ENCODE measurements at regions of chr7 and their contacts with region 1.

Region 1: DNA sequence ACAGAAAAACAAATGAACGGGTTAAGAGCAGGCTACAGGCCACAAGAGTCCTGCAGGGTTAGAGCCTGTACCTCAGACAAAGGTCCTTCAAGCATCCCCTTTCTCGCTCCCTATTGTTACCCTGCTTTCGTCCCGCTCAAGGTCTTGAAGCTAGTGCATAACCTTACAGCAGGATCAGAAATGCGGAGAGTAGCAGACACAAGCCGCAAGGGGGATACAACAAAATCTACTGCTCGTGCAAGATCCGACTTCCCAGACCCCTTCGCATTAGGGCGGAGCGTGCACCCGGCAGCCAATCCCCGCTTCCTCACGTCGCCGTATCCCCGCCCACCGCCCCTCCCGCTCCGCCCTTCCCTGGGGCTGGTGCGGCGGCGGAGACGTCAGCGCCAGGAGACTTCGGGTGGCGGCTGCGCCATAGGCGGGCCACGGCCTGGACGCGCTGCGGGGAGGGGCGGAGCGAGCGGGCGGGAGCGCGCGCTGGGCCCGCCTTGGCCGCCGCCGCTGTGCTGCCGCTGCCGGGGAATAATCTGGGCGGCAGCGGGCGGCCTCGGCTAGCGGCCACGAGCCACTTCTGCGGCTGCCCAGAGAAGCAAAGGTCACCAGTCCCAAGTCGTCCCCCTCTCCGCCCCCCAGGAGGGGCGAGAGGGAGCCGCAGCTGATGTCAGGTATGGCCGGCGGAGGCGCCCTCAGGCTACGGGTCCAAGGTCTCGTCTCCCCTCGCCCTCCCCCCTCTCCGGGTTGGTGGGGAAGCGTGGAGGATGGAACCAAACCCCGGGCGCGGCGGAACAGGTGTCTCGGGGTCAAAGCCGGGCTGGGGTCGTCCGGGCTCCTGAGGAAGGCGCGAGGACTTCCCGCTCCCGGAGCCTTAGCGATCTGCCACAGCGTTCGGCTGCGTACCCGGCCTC is at the start of gene C1GALT1:
- DNase-seq: peak; percentile 96 to 98 (median 98)
- H3K4me3 ChIP-seq: peak within 1 kb of the TSS; percentile 100
- H3K4me3 Mint-ChIP-seq: peak within 1 kb of the TSS; percentile 89 to 98 (median 93)
- H3K27ac ChIP-seq: peak within 1 kb of the TSS; percentile 95
- H3K27ac Mint-ChIP-seq: peak within 1 kb of the TSS; percentile 91 to 98 (median 98)
- H3K4me1 ChIP-seq: peaks cover 43% of the 10 kb centered on the region
- H3K4me1 Mint-ChIP-seq: peaks cover 11 to 28% (median 17%) of the 10 kb centered on the region in 3 donors
- H3K27me3 ChIP-seq: no peaks in the 10 kb centered on the region
- H3K27me3 Mint-ChIP-seq: no peaks in the 10 kb centered on the region
- total RNA-seq, gene C1GALT1: 40.4 to 40.7 TPM

Region 2: DNA sequence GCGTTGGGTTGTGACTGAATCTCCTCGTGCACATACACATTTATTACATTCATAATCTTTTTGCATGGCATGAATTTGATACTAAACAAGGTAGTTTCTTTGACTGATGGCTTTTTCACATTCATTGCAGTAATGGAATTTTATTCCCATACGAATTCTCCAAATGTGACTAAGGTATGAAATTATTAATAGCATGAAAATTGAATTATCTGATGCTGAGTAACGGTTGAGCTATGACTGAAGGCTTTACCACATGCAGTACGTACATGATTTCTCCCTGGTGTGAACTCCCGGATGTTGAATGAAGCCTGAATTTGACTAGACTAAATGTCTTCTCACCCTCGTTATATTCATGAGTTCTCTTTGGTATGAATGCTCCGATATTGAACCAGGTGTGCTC is 104.5 kb before region 1 on chr7:
- CTCF ChIA-PET with region 1: no interaction called
- POLR2A ChIA-PET with region 1: no interaction called
- DNase-seq: no peak
- H3K4me3 ChIP-seq: no peak overlapping the region
- H3K4me3 Mint-ChIP-seq: no peak overlapping the region
- H3K27ac ChIP-seq: no peak overlapping the region
- H3K27ac Mint-ChIP-seq: no peak overlapping the region
- H3K4me1 ChIP-seq: no peaks in the 10 kb centered on the region
- H3K4me1 Mint-ChIP-seq: peaks cover 0 to 7% (median 0%) of the 10 kb centered on the region in 3 donors
- H3K27me3 ChIP-seq: no peaks in the 10 kb centered on the region
- H3K27me3 Mint-ChIP-seq: peaks cover 0 to 3% of the 10 kb centered on the region in 2 donors

Region 3: GRCh38 chr7:7103343-7104313 is 78.8 kb before region 1 on chr7:
- CTCF ChIA-PET with region 1: interaction called, 36 read pairs
- POLR2A ChIA-PET with region 1: interaction called, 3 read pairs
- DNase-seq: peak in 2 of 5 donors; percentile 48 to 58
- H3K4me3 ChIP-seq: no peak overlapping the region
- H3K4me3 Mint-ChIP-seq: no peak overlapping the region
- H3K27ac ChIP-seq: peak overlapping the region; percentile 47
- H3K27ac Mint-ChIP-seq: peak overlapping the region in 2 of 8 donors; percentile 27 to 29
- H3K4me1 ChIP-seq: peaks cover 11% of the 10 kb centered on the region
- H3K4me1 Mint-ChIP-seq: peaks cover 5 to 21% (median 19%) of the 10 kb centered on the region in 3 donors
- H3K27me3 ChIP-seq: no peaks in the 10 kb centered on the region
- H3K27me3 Mint-ChIP-seq: no peaks in the 10 kb centered on the region

Region 4: GRCh38 chr7:7157177-7157886 is 25.1 kb before region 1 on chr7:
- CTCF ChIA-PET with region 1: interaction called, 11 read pairs
- POLR2A ChIA-PET with region 1: interaction called, 17 read pairs
- DNase-seq: peak; percentile 13 to 84 (median 75)
- H3K4me3 ChIP-seq: peak overlapping the region; percentile 52
- H3K4me3 Mint-ChIP-seq: peak overlapping the region; percentile 70 to 86 (median 79)
- H3K27ac ChIP-seq: peak overlapping the region; percentile 13
- H3K27ac Mint-ChIP-seq: peak overlapping the region; percentile 62 to 94 (median 82)
- H3K4me1 ChIP-seq: peaks cover 48% of the 10 kb centered on the region
- H3K4me1 Mint-ChIP-seq: peaks cover 51 to 59% (median 57%) of the 10 kb centered on the region in 3 donors
- H3K27me3 ChIP-seq: no peaks in the 10 kb centered on the region
- H3K27me3 Mint-ChIP-seq: no peaks in the 10 kb centered on the region

Region 5: GRCh38 chr7:7375538-7375937 is 193.1 kb after region 1 on chr7:
- CTCF ChIA-PET with region 1: no interaction called
- POLR2A ChIA-PET with region 1: no interaction called
- DNase-seq: no peak
- H3K4me3 ChIP-seq: no peak overlapping the region
- H3K4me3 Mint-ChIP-seq: no peak overlapping the region
- H3K27ac ChIP-seq: no peak overlapping the region
- H3K27ac Mint-ChIP-seq: no peak overlapping the region
- H3K4me1 ChIP-seq: no peaks in the 10 kb centered on the region
- H3K4me1 Mint-ChIP-seq: no peaks in the 10 kb centered on the region
- H3K27me3 ChIP-seq: no peaks in the 10 kb centered on the region
- H3K27me3 Mint-ChIP-seq: peaks cover 2 to 12% of the 10 kb centered on the region in 2 donors

Region 6: DNA sequence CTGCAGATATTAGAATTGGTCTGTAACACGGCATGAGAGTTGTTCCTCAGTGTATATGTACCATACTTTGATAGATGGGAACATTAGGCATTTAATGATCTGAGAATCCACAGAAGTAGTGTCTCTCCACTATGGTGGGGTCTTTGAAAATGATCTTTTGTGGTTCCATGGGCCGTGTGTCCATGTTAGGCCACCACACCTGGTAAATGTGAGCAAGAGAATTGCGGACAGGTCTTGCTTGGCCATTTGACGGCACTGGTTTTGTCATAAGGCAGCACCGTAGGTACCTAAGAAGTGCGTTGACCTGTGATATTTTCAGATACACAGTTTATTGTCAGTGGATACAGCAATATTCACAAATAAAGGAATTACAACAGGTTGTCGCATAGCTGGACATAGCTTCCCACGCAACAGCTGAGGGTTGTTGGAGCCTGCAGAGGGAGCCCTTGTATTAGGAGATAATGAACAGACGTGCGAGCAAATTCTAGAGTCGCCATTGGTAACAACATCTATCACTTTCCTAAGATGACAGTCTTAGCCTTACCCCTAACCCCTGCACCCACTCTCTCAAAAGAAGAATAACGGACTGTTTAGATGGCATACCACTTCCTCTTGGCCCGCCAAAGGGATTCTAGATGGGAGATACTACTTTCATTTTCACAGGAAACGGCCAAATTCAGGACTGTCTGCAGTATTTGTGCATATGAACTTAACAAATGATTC is 241.9 kb after region 1 on chr7:
- CTCF ChIA-PET with region 1: interaction called, 11 read pairs
- POLR2A ChIA-PET with region 1: no interaction called
- DNase-seq: peak in 4 of 5 donors; percentile 8 to 52 (median 30)
- H3K4me3 ChIP-seq: peak overlapping the region; percentile 68
- H3K4me3 Mint-ChIP-seq: peak overlapping the region in 5 of 7 donors; percentile 80 to 92 (median 85)
- H3K27ac ChIP-seq: no peak overlapping the region
- H3K27ac Mint-ChIP-seq: peak overlapping the region in 6 of 8 donors; percentile 31 to 82 (median 71)
- H3K4me1 ChIP-seq: no peaks in the 10 kb centered on the region
- H3K4me1 Mint-ChIP-seq: peaks cover 6 to 14% (median 9%) of the 10 kb centered on the region in 3 donors
- H3K27me3 ChIP-seq: no peaks in the 10 kb centered on the region
- H3K27me3 Mint-ChIP-seq: peaks cover 3 to 6% of the 10 kb centered on the region in 2 donors